WTC11 (cell line): ENCODE measurements at regions of chr16 and their contacts with region 1.

Region 1: DNA sequence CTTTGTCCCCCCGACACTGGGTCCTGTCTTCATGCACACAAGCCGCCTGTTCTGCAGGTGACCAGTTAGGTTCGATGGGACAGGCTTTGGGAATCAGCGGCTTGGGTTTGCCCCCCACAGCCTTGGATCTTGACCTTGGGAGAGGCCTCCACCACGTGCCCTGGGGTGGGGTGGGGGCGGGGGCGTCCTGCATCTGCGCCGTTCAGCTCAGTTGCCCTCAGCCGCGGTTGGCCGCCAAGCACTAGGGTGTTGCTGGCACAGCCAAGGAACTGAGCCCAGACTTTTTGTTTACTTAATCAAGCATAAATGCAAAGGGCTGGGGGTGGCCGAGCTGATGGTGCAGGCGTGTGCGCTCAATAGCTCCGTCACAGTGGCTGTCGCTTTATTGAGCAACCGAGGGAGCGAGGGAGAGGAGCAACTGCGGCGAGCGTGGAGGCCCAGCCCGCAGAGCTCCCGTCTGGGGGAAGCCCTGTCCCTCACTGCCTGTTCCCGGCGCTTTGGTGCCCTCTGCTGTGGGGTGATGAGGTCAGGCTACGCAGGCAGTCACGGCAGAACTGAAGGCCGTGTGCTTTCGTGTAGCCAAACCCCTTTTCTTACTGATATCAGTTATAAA is 33.9 kb downstream of the JPH3 start:
- DNase-seq: peak; percentile 88
- ATAC-seq: peak; percentile 91
- H3K4me3 Mint-ChIP-seq: peak overlapping the region; percentile 43
- H3K27ac Mint-ChIP-seq: no peak overlapping the region
- H3K4me1 Mint-ChIP-seq: peaks cover 9% of the 10 kb centered on the region
- H3K27me3 Mint-ChIP-seq: no peaks in the 10 kb centered on the region
- CTCF ChIP-seq: peak; percentile 35; the same call in 1 of the 2 replicates

Region 2: DNA sequence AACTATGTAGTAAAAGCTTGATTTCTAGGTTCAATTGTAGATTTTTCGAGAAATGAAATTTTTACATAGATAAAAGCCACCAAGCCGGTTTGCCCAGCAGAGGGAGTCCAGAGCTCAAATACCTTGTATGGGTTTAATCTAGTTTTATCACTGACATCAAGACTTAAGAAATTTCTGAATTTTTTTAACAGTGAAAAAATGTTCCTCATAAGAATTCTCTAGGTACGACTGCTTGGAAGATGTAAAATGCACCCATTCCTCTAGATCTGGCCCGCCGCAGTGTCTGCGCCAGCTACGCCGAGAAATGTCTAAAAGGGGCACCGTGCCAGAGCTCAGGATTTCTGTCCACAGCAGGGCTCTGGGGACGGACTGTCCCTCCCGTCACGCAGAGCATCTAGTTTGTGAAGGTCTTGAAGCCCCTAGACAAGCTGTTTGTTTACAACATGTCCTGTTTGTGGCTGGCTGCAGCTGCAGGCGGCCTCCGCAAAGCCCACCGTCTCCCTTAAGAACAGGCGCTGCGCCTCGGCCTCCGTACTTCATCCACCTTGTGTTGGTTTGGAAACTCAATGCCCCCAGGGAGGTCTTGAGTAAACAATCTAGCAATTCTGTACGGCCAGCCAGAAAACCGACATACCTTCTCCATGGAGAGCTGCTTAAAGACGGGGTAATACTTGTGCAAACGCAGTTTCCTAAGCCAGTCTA is 219.2 kb before region 1 on chr16:
- CTCF ChIA-PET with region 1: interaction called, 19 read pairs
- POLR2A ChIA-PET with region 1: no interaction called
- DNase-seq: no peak
- ATAC-seq: no peak
- H3K4me3 Mint-ChIP-seq: no peak overlapping the region
- H3K27ac Mint-ChIP-seq: no peak overlapping the region
- H3K4me1 Mint-ChIP-seq: no peaks in the 10 kb centered on the region
- H3K27me3 Mint-ChIP-seq: no peaks in the 10 kb centered on the region
- CTCF ChIP-seq: no peak; the same call in 1 of the 2 replicates

Region 3: GRCh38 chr16:87540945-87541877 is 95.0 kb before region 1 on chr16:
- CTCF ChIA-PET with region 1: interaction called, 13 read pairs
- POLR2A ChIA-PET with region 1: no interaction called
- DNase-seq: no peak
- ATAC-seq: no peak
- H3K4me3 Mint-ChIP-seq: no peak overlapping the region
- H3K27ac Mint-ChIP-seq: no peak overlapping the region
- H3K4me1 Mint-ChIP-seq: peaks cover 25% of the 10 kb centered on the region
- H3K27me3 Mint-ChIP-seq: peaks cover 11% of the 10 kb centered on the region
- CTCF ChIP-seq: no peak

Region 4: DNA sequence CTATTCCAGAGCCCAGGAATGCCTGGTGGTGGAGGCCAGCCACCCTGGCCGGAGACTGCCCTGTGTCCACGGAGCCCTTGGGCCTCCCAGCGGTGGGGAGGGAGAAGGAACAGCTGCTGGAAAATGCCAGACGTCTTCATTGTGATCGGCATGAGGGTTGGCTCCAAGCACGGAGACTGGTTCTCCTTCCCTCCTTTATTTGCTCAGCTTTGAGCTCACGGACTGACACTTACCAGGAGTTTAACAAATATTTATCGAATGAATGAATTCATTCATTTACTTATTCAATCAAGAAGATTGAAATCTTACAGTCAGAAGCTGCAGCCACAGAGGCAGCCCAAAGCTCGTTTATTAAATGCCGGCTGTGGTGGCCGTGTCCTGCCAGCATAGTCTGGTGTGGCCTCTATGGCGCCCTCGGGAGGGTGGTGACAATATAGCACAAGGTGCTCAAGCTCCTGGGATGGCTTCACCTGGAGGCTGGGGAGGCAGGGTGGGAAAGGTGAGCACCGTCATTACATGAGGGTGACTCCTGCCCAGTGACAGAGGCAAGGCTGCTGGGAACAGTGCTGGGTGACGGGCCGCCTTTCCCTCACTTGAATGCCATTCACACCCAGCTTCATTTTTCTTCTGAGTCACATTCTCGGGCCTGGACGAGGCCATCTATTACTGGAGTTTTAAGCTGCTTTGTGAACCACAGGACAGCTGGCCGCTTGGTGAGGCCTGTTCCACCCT is 64.9 kb before region 1 on chr16:
- CTCF ChIA-PET with region 1: interaction called, 64 read pairs
- POLR2A ChIA-PET with region 1: interaction called, 3 read pairs
- DNase-seq: peak; percentile 85
- ATAC-seq: peak; percentile 77
- H3K4me3 Mint-ChIP-seq: no peak overlapping the region
- H3K27ac Mint-ChIP-seq: no peak overlapping the region
- H3K4me1 Mint-ChIP-seq: peaks cover 28% of the 10 kb centered on the region
- H3K27me3 Mint-ChIP-seq: no peaks in the 10 kb centered on the region; the same call in 1 of the 2 replicates
- CTCF ChIP-seq: no peak

Region 5: DNA sequence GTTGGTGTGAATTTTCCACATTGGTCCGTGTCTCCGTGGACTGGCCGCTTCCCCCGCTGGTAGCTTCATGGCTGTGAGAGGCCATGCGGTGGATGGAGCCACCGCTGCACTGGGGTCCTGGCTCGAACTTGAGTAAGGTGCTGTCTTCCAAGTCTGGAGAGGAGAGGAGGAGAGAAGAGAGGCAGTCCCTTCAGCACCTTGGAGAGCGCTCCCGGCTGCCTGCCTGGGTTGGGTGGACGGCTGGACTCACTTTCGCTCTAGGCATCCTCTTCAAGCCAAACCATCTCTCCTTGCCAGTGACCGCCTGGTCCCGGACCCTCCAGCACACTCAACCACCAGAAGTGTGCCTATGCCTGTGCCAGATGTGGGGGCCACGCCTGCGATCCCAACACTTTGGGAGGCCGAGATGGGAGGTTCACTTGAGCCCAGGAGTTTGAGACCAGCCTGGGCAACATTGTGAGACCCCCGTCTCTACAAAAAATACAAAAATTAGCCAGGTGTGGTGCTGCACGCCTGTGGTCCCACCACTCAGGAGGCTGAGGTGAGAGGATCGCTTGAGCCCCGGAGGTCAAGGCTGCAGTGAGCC is 27.7 kb before region 1 on chr16:
- CTCF ChIA-PET with region 1: interaction called, 50 read pairs
- POLR2A ChIA-PET with region 1: interaction called, 3 read pairs
- DNase-seq: peak; percentile 90
- ATAC-seq: peak; percentile 77
- H3K4me3 Mint-ChIP-seq: no peak overlapping the region
- H3K27ac Mint-ChIP-seq: no peak overlapping the region
- H3K4me1 Mint-ChIP-seq: peaks cover 24% of the 10 kb centered on the region
- H3K27me3 Mint-ChIP-seq: peaks cover 12% of the 10 kb centered on the region
- CTCF ChIP-seq: no peak

Region 6: DNA sequence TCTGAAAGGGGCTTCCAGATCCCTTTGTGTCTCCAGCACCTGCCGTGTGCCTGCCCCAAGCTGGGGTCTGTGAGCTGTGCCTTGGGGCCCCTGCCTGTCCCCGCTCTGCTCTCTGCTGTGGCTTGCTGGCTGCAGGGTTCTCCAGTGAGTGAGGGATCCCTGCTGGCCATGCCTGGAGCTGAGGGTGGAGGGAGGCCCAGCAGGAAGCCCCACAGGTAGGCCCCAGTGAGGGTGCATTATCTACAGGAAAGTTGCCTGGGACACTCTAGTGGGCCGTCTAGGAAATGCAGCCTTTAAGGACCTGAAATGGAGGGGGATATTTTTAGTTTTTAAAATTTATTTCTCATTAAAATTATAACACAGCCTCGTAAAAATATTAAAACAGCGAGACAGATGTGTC is 17.1 kb after region 1 on chr16:
- CTCF ChIA-PET with region 1: interaction called, 82 read pairs
- POLR2A ChIA-PET with region 1: no interaction called
- DNase-seq: no peak
- ATAC-seq: peak; percentile 34
- H3K4me3 Mint-ChIP-seq: no peak overlapping the region
- H3K27ac Mint-ChIP-seq: no peak overlapping the region
- H3K4me1 Mint-ChIP-seq: peaks cover 26% of the 10 kb centered on the region
- H3K27me3 Mint-ChIP-seq: no peaks in the 10 kb centered on the region
- CTCF ChIP-seq: peak; percentile 46; the same call in 1 of the 2 replicates

Region 7: DNA sequence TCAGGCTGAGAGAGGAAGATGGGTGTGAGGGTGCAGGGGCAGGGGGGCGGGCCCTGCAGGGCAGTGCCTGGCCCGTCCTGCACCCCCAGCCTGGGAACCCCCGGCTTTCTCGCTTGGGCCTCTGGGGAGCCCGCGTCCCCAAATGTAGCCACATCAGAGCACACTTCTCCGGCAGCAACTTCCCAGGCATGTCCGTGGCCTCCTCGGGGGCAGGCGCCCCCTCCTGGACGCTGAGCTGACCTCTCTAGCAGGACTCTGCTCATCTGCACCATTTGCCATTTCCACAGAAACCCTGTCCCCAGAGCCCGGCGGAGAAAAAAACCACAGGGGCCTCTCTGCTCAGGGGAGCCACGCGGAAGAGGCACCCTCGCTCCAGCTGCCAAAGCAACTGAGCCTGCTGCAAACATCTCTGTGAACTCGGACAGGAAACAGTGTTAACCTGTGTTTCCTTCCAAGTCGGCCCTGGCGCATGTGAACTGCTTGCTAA is 66.2 kb after region 1 on chr16:
- CTCF ChIA-PET with region 1: interaction called, 11 read pairs
- POLR2A ChIA-PET with region 1: no interaction called
- DNase-seq: peak; percentile 74
- ATAC-seq: peak; percentile 74
- H3K4me3 Mint-ChIP-seq: no peak overlapping the region
- H3K27ac Mint-ChIP-seq: peak overlapping the region; percentile 53; the same call in 1 of the 2 replicates
- H3K4me1 Mint-ChIP-seq: peaks cover 8% of the 10 kb centered on the region
- H3K27me3 Mint-ChIP-seq: no peaks in the 10 kb centered on the region
- CTCF ChIP-seq: peak; percentile 39; the same call in 1 of the 2 replicates

Region 8: DNA sequence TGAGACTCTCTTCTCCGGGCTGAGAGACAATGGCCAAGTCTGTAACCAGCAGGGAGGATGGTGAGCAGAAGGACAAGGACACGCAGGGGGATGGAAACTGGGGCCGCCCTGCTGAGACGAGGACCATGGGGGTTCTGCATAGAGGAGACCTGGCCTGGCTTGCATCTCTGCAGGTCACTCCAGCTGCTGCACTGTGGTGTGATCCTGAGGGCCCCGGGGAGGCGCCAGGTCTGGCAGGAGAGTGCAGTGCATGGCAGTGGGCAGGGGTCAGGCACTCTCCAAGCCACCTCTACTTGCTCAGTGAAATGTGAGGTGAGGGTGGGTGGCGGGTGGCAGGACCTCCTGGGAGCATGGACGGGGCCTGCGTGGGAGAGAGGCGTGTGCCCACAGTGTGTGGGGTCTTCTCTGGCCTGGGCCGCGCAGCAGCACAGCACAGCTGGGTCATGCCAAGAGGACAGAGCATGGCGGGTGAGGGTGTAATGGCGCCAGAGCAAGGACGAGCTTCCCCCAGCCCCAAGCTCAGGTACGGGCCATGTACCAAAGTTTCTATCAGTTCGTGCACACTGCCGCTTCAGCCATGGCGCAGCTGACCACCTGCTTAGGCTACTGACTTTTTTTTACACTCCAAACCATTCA is 86.5 kb after region 1 on chr16:
- CTCF ChIA-PET with region 1: no interaction called
- POLR2A ChIA-PET with region 1: no interaction called
- DNase-seq: no peak
- ATAC-seq: no peak
- H3K4me3 Mint-ChIP-seq: no peak overlapping the region
- H3K27ac Mint-ChIP-seq: peak overlapping the region; percentile 70
- H3K4me1 Mint-ChIP-seq: 0 out of 2 replicates have a peak, but pooled peaks cover 3% of the 10 kb centered on the region
- H3K27me3 Mint-ChIP-seq: no peaks in the 10 kb centered on the region
- CTCF ChIP-seq: no peak

Region 9: GRCh38 chr16:87733190-87733589 is 97.0 kb after region 1 on chr16:
- CTCF ChIA-PET with region 1: no interaction called
- POLR2A ChIA-PET with region 1: no interaction called
- DNase-seq: no peak
- ATAC-seq: no peak
- H3K4me3 Mint-ChIP-seq: no peak overlapping the region
- H3K27ac Mint-ChIP-seq: no peak overlapping the region
- H3K4me1 Mint-ChIP-seq: peaks cover 2% of the 10 kb centered on the region; the same call in 1 of the 2 replicates
- H3K27me3 Mint-ChIP-seq: no peaks in the 10 kb centered on the region
- CTCF ChIP-seq: no peak